ENCODE measurements at regions of chr6 and their contacts with region 1.

Region 1: DNA sequence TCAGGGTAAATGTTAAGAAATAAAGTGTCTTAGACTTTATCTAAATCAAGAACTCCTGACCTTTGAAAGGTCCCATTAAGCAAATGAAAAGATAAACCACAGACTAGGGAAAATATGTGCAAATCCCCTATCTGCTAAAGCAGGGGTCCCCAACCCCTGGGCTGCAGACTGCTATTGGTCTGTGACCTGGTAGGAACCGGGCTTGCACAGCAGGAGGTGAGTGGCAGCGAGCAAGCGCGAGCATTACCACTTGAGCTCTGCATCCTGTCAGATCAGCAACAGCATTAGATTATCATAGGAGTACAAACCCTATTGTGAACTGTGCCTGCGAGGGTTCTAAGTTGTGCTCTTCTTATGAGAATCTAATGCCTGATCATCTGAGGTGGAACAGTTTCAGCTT is 42.4 kb downstream of the LCA5 start:
- DNase-seq: peak; percentile 76

Region 2: GRCh38 chr6:79544939-79545450 is 50.2 kb after region 1 on chr6:
- intact Hi-C with region 1: no loop called
- DNase-seq: peak; percentile 89

Region 3: DNA sequence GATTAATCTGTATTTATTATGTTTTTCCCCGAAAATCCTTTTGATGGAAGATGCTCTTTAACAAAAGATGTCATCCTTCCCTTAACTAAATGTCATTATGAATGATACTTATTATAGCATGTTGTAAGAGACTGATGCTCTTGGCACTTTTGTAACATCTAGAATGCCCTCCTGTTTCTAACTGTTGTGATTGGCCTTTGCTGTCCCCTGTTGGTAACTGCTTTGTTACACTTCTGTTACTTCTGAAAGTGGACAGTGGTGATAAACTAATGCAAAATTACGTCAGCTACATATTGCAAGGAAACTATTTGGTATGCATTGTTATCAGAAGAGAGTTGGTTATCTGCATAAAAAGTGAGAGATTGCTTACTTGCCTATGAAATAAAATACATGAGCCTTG is 515.4 kb after region 1 on chr6:
- intact Hi-C with region 1: loop called in 1 of 2 experiments (anchors 5 kb)
- DNase-seq: no peak